ENCODE measurements at regions of chr2 and their contacts with region 1.

Region 1: GRCh38 chr2:221649051-221649775 is 77.1 kb upstream of the EPHA4 start:
- DNase-seq: peak; percentile 24 to 27
- ATAC-seq: no peak
- H3K4me3 ChIP-seq: no peak overlapping the region
- H3K27ac ChIP-seq: no peak overlapping the region
- H3K4me1 ChIP-seq: no peaks in the 10 kb centered on the region
- H3K27me3 ChIP-seq: peaks cover 0 to 5% (median 0%) of the 10 kb centered on the region in 7 donors
- CTCF ChIP-seq: no peak

Region 2: GRCh38 chr2:220053919-220054318 is 1595.3 kb before region 1 on chr2:
- intact Hi-C with region 1: loop called in 1 of 10 experiments (anchors 2 kb)
- DNase-seq: no peak
- ATAC-seq: no peak
- H3K4me3 ChIP-seq: no peak overlapping the region
- H3K27ac ChIP-seq: no peak overlapping the region
- H3K4me1 ChIP-seq: no peaks in the 10 kb centered on the region
- H3K27me3 ChIP-seq: no peaks in the 10 kb centered on the region
- CTCF ChIP-seq: no peak

Region 3: GRCh38 chr2:221492636-221493035 is 156.6 kb before region 1 on chr2:
- intact Hi-C with region 1: no loop called
- DNase-seq: no peak
- ATAC-seq: no peak
- H3K4me3 ChIP-seq: no peak overlapping the region
- H3K27ac ChIP-seq: no peak overlapping the region
- H3K4me1 ChIP-seq: peaks cover 0 to 7% (median 0%) of the 10 kb centered on the region in 9 donors
- H3K27me3 ChIP-seq: no peaks in the 10 kb centered on the region
- CTCF ChIP-seq: no peak

Region 4: DNA sequence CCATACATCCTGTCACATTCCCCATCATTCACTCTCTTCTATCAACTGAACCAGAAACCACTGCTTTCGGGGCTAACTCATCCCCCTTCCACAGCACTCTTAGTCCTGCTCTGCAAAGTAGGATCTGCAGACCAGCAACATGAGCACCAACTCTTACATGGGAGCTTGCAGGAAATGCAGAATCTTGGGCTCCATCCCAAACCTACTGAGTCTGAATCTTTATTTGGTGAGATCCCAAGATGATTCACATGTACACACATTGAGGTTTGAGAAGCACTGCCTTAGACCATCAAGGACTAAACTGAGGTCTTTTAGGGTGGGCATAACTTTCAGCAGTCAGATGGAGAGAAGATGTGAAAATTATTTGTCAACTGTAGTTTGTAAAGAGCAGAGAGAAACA is 158.5 kb after region 1 on chr2:
- intact Hi-C with region 1: no loop called
- DNase-seq: no peak
- ATAC-seq: no peak
- H3K4me3 ChIP-seq: no peak overlapping the region
- H3K27ac ChIP-seq: no peak overlapping the region
- H3K4me1 ChIP-seq: no peaks in the 10 kb centered on the region
- H3K27me3 ChIP-seq: no peaks in the 10 kb centered on the region
- CTCF ChIP-seq: no peak